Activated CD4-positive, alpha-beta memory T cell treated with anti-CD3 and anti-CD28 coated beads, Interleukin-2, amount 10 ng/mL, durations not matched to agents 7 days and 5 days (primary cell): ENCODE measurements at regions of chr10 and their contacts with region 1.

Region 1: DNA sequence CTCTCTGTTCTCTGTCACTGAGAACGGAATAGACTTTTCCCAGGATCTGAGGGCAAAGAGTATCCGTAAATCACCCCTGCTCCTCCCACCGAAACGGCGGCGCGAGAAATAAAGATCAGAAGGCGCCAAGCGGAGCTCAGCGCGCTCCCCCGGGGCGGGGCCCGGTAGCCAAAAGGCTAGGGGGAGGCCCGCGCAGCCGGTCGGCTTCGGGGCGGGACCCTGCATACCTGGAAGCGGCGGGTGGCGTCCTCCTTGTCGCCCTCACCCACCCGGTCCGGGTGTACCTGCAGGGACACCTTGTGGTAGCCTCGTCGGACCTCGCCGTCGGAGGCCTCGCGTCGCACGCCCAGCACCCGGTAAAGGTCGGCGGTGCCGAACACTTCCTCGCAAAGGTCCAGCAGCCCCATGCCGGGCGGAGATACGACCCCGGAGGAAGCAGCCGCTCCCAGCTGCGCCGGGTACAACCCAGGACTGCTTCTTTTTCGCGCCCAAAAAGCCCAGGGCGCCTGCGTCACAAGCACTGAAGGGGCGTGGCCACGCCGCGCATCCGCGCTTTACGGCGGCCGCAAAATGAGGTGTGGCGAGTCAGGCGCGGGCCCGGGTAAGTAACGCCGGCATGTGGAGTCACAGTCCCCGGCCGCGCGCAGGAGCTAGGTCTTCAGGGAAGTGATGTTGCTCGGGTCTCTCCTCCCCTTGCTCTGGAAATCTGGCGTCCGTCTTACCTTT is at the start of gene DNAJC9:
- DNase-seq: peak; percentile 98
- H3K4me3 Mint-ChIP-seq: peak within 1 kb of the TSS; percentile 99
- H3K27ac Mint-ChIP-seq: peak within 1 kb of the TSS; percentile 95
- H3K4me1 Mint-ChIP-seq: peaks cover 71% of the 10 kb centered on the region
- H3K27me3 Mint-ChIP-seq: no peaks in the 10 kb centered on the region
- total RNA-seq, gene DNAJC9: 46.9 to 49.6 TPM

Region 2: DNA sequence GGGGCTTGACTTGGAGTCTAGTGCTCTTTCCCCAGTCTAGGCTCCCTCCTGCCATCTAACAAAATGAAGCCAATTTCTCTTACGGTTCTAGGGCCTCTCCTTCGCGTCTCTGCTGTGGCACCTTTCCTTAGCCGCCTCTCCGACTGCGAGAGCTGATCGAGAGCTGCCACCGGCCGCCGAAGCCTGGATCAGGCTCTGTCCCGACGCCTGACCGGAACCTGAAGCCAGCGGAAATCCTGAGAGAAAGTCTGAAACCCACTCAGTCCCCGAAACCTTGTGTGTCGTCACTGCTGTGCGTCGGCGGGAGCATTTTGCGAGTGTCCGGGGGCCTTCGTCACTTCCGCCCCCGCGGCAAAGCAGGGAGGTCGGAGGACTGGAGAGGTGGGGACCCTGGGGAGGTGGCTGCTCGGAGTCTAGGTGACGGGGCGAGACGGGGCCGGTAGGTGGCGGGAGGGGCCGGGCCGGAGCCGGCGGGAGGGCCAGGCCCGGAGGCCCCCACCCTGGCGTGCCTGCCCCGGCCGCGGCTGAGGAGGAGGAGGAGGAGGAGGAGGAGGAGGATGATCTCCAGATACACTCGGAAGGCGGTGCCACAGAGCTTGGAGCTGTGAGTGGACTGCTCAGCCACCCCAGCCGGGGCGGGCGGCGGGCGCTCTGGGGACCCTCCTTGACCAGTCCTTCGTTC is 79.0 kb before region 1 on chr10 and contains the starts of genes ECD and FAM149B1:
- CTCF ChIA-PET with region 1: interaction called, 7 read pairs
- POLR2A ChIA-PET with region 1: interaction called, 35 read pairs
- DNase-seq: peak; percentile 94
- H3K4me3 Mint-ChIP-seq: peak within 1 kb of the TSS; percentile 100
- H3K27ac Mint-ChIP-seq: peak within 1 kb of the TSS; percentile 98
- H3K4me1 Mint-ChIP-seq: peaks cover 40% of the 10 kb centered on the region
- H3K27me3 Mint-ChIP-seq: no peaks in the 10 kb centered on the region
- total RNA-seq, gene ECD: 27.1 to 28.5 TPM
- total RNA-seq, gene FAM149B1: 15.7 to 17.4 TPM

Region 3: GRCh38 chr10:73232887-73233286 is 14.1 kb before region 1 on chr10:
- CTCF ChIA-PET with region 1: interaction called, 3 read pairs
- POLR2A ChIA-PET with region 1: interaction called, 17 read pairs
- DNase-seq: no peak
- H3K4me3 Mint-ChIP-seq: no peak overlapping the region
- H3K27ac Mint-ChIP-seq: no peak overlapping the region
- H3K4me1 Mint-ChIP-seq: no peaks in the 10 kb centered on the region
- H3K27me3 Mint-ChIP-seq: no peaks in the 10 kb centered on the region

Region 4: GRCh38 chr10:73358331-73359279 is 111.7 kb after region 1 on chr10 and contains the start of gene CFAP70:
- CTCF ChIA-PET with region 1: no interaction called
- POLR2A ChIA-PET with region 1: interaction called, 13 read pairs
- DNase-seq: peak; percentile 95
- H3K4me3 Mint-ChIP-seq: peak within 1 kb of the TSS; percentile 93
- H3K27ac Mint-ChIP-seq: peak within 1 kb of the TSS; percentile 71
- H3K4me1 Mint-ChIP-seq: peaks cover 21% of the 10 kb centered on the region
- H3K27me3 Mint-ChIP-seq: peaks cover 11% of the 10 kb centered on the region
- total RNA-seq, gene CFAP70: 0.28 to 0.70 TPM

Region 5: GRCh38 chr10:73413528-73414229 is 166.7 kb after region 1 on chr10 and contains the start of gene ANXA7:
- CTCF ChIA-PET with region 1: interaction called, 3 read pairs
- POLR2A ChIA-PET with region 1: interaction called, 23 read pairs
- DNase-seq: peak; percentile 95
- H3K4me3 Mint-ChIP-seq: peak within 1 kb of the TSS; percentile 84
- H3K27ac Mint-ChIP-seq: peak within 1 kb of the TSS; percentile 83
- H3K4me1 Mint-ChIP-seq: peaks cover 53% of the 10 kb centered on the region
- H3K27me3 Mint-ChIP-seq: peaks cover 3% of the 10 kb centered on the region
- total RNA-seq, gene ANXA7: 98.7 to 107 TPM